ENCODE measurements at regions of chr17 and their contacts with region 1.

Region 1: DNA sequence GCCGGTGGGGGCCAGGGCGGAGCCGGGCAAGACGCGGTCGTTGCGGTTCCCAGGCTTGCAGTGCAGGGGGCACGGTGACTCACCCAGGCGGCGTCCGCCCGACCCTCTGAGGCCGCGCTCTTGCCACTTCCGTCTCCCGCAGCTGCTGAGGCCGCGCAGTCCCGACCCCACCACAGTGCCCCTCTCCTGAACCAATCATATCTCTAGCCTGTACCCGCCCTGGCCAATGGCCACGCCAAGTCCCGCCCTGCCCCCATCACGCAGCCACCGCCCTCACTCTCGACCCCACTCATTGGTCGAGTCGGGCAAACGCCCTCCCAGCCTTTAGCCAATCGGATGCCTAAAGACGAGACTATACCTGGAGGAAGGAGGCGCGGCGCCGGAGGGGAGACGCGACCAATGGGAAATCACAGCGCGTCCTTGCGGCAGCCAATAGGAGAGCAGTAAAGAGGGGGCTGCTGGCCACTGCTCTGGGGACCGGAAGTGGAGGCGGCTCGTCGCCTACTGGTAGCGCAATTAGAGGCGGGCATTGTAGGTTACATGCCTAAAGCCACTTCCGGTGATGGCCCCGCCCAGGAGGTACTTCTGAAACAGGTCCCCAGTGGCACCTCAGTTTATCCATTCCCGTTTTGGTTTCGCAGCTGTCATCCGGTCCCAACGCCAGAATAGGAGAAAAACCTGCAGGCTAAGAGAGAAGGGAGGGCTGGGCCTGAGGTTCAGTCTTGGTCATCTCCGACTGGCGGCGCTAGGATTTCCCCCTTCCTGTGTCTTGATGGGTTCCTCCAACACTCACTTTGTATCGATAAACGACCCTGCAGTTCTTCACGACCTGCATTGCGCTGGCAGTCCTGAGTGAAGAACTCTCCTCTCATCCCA is 3.5 kb upstream of the MTMR4 start:
- DNase-seq: peak; percentile 100
- ATAC-seq: peak; percentile 90 to 92

Region 2: GRCh38 chr17:57541472-57542394 is 976.2 kb before region 1 on chr17:
- intact Hi-C with region 1: no loop called
- DNase-seq: peak; percentile 78
- ATAC-seq: peak; percentile 91 to 95

Region 3: DNA sequence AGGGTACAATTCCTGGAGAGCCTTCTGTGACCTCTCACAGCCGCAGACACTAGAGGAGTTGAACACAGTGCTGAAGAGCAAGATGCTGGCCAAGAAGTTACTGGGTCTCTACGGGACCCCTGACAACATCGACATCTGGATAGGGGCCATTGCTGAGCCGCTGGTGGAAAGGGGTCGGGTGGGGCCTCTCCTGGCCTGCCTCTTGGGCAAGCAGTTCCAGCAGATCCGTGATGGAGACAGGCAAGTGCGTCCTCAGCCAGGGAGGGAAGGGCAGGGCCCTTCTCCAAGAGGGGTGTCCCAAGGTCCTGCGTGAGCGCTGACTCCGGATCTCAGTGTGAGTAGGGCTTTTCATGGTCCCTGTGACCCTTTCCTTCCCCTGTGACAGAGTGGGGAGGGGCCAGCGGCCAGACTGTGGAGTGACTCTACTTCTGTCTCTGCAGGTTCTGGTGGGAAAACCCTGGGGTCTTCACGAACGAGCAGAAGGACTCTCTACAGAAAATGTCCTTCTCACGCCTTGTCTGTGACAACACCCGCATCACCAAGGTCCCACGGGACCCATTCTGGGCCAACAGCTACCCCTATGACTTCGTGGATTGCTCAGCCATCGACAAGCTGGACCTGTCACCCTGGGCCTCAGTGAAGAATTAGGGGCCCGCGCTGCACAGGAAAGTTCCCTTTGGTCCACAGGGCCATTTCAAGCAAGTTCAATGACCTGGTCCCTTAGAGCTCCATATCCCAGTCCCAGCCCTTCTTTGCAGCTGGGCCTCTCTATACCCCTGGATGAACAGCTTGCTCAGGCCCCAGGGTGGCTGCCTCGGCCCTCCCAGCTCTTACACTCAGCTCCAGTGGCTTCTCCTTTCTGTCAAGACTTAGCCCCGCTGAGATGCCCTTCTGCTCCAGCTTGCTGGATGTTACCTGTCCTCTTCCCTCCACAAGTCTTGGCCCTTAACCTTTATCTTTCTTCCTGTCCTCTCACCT is 250.3 kb before region 1 on chr17:
- intact Hi-C with region 1: no loop called
- DNase-seq: no peak
- ATAC-seq: no peak

Region 4: DNA sequence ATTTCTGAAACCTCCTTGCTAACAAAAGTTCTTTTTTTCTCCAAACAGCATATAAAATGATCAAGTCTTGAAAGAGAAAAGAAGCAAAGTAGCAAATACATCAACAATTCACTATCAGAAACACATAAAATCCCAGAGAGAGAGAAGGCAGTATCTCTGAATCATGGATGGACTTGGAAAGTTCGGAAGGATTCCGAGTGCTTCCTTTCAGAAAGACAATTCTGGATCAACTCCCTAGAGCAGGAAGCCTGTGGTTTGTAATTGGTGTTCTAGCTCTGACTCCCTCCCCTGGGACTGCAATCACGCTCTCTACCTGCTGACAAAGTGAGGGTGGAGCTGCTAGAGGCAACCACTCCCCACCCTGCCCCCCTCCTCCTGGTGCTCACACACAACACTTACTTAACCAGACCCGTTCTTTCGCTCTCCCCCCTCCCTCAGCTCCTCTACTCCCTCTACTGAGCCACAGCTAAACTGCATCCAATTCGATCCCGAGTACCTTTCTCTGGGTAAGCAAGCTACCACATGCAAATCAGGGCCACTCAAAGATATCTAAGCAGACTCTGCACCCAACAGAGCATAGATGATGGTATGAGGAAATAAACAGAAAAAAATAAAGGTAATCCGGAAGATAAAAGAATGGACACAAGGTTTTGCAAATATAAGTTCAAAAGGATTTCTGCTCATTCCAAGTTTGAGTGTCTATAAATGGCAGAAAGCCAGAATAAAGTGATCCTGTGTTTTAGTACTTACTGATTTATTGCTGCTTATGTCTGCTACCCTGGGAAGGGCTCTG is 100.5 kb before region 1 on chr17 and contains the start of gene RNF43:
- intact Hi-C with region 1: no loop called
- DNase-seq: peak; percentile 86
- ATAC-seq: peak; percentile 99 to 100
- total RNA-seq, gene RNF43: 4.0 to 4.7 TPM

Region 5: GRCh38 chr17:58577642-58578091 is 59.7 kb after region 1 on chr17:
- intact Hi-C with region 1: loop called in 1 of 2 experiments (anchors 10 kb)
- DNase-seq: peak; percentile 55
- ATAC-seq: peak; percentile 41 to 49

Region 6: DNA sequence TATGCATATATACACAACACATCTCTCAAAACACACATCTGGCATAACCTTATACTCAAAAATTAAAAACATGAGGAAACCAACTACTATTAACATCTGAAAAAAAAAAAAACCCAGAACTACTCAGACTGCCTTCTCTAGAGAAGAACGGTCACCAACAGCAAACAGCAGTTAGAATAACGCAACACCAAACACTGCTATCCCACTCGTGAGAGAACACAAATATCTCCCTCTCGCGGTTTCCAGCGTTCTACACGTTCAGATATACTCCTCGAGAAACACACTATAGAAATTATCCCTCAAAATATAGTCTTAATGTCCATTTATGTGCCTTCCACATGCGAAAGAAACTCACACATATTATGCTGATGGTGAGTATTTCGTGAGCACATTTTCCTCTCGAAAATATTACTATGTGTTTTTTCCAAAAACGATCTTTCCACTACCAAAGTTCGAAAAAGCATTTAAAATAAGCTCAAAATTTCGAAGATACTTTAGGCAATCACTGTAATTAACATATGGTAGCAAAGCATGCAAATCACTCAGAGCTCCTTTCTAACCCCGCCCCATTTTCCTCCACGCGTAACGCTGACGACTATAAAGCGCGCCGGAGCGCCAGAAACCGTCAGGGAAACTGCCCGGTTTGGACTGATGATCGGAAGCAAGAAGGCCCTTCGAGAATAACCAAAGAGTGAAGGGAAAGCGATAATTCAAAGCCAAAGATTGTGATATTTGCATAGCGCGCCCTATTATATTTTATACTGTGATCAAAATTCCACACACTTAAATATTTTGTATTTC is 113.8 kb after region 1 on chr17:
- intact Hi-C with region 1: loop called in 1 of 2 experiments (anchors 5 kb)
- DNase-seq: peak; percentile 95
- ATAC-seq: peak; percentile 98 to 99

Region 7: GRCh38 chr17:58692239-58693055 is 174.5 kb after region 1 on chr17 and contains the start of gene RAD51C:
- intact Hi-C with region 1: loop called (anchors 10 kb)
- DNase-seq: peak; percentile 90
- ATAC-seq: peak; percentile 99 to 100
- total RNA-seq, gene RAD51C: 32.4 to 36.8 TPM

Region 8: GRCh38 chr17:59004338-59005111 is 486.6 kb after region 1 on chr17:
- intact Hi-C with region 1: loop called in 1 of 2 experiments (anchors 2 kb)
- DNase-seq: peak; percentile 53
- ATAC-seq: peak; percentile 68 to 70

Measured in left cardiac atrium (tissue), 4 donors.